ENCODE measurements at regions of chr19 and their contacts with region 1.

Region 1: GRCh38 chr19:14556662-14557188 is 15.1 kb downstream of the NDUFB7 start:
- DNase-seq: peak; percentile 82
- ATAC-seq: peak; percentile 87
- H3K4me3 Mint-ChIP-seq: peak overlapping the region; percentile 9
- H3K27ac Mint-ChIP-seq: peak overlapping the region; percentile 50
- H3K4me1 Mint-ChIP-seq: peaks cover 21% of the 10 kb centered on the region
- H3K27me3 Mint-ChIP-seq: no peaks in the 10 kb centered on the region

Region 2: DNA sequence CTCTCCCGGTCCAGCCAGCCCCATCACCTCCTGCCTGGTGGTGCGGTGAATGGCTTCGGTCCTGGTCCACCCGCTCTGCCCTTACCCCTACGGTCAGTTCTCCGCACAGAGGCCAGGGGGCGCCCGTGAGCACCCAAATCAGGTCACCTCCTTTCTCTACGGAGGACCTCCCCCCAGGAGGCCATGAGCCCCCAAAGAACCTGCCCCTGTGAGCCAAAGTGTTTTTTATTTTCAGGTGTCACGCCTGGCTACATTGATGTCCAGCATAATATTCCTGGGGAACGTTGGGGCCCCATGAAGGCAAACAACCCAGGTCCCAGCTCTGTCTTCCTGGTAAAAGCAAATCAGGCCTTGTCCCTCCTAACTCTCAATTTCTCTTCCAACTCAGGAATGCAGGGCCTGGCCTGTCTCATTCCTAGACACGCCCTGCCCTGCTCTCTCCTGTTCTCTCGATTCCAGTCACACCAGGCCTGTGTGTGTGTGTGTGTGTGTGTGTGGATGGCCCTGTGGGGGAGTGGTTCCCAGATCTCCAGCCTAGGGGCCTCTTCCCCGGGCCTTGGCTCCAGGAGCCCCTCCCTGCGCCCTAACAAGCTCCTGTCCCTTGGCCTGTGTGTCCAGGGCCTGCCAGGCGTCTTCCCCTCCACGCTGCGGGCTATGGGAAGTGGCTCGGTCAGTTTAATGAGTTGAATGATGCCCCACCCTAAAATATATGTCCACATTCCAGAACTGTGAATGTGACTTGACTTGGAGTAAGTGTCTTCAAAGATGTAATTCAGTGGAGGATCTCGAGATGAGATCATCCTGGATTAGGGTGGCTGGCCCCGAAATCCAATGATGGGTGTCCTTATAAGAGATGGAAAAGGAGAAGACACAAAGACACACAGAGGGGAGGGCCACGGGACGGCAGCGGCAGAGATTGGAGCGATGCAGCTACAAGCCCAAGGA is 51.0 kb before region 1 on chr19:
- CTCF ChIA-PET with region 1: interaction called, 11 read pairs
- DNase-seq: peak; percentile 82
- ATAC-seq: peak; percentile 72
- H3K4me3 Mint-ChIP-seq: no peak overlapping the region
- H3K27ac Mint-ChIP-seq: peak overlapping the region; percentile 65
- H3K4me1 Mint-ChIP-seq: peaks cover 33% of the 10 kb centered on the region
- H3K27me3 Mint-ChIP-seq: no peaks in the 10 kb centered on the region

Region 3: DNA sequence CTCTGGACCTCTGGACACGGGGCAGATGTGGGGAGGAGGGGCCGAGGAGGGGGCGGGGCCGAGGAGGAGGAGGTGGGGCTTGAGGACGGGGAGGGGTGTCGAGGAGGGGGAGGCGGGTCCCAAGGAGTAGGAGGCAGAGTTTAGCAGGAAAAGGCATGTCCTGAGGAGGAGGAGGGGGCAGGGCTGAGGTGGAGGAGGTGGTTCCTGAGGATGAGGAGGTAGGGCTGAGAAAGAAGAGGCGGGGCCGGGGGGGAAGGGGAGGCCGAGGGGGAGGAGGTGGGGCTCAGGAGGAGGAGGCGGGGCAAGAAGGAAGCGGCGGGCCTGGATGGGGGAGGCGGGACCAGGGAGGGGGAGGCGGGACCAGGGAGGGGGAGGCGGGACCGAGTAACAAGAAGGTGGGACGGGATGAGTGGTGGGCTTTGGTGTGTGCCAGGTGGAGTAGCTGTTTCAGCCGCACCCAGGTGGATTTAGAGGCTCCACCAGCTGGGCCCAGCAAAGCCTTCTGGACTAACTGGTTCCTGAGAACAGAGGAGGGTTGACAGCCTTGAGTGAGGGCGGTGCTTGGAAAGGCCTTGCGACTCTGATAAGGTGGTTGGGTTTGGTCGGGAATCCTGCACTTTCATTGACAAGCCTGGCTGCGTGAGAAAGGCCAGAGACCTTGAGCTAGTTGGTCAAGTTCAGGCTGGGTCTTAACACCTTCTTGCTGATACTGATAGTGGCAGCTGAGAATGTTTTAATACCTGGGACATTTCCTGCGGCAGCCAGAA is 19.6 kb before region 1 on chr19:
- CTCF ChIA-PET with region 1: interaction called, 10 read pairs
- DNase-seq: peak; percentile 68
- ATAC-seq: peak; percentile 66
- H3K4me3 Mint-ChIP-seq: no peak overlapping the region
- H3K27ac Mint-ChIP-seq: no peak overlapping the region
- H3K4me1 Mint-ChIP-seq: peaks cover 12% of the 10 kb centered on the region
- H3K27me3 Mint-ChIP-seq: no peaks in the 10 kb centered on the region

Region 4: DNA sequence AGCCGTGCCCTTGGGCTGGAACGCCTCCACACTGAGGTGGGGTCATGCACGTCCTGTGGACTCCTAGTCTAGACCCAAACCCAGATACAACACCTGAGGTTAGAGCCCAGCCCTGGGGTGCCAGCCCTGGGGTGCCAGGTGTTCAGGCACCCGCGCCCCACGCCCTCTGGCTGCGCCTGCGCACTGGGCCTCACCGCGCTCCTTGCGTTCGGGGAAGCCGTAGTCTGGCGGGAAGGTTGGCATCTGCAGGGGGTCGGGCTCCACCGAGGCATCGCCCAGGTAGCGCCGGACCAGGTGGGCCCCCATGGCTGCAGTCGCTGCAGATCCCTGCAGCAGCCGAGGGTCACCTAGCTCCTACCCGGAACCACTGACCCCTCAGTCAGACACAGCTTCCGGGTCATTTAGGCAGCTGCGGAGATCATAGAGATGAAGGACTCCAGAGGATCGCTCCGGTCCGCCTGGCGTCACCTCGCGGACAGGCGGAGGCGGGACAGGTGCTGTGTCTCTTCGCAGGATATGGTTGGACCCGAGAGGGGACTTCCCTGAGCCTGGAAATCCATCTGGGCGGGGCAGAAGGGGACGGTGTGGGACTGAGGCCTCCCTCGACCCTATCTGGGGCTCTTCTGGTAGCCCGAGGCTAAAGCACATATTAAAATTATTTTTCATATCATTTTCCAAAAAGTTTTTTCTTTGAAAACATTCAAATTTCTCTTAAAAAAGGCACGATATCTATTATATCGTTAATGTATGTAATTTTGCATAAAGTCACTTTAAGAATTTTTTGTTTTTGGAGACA is 15.2 kb after region 1 on chr19 and contains the start of gene NDUFB7:
- CTCF ChIA-PET with region 1: interaction called, 49 read pairs
- DNase-seq: peak; percentile 95
- ATAC-seq: peak; percentile 98
- H3K4me3 Mint-ChIP-seq: peak within 1 kb of the TSS; percentile 97
- H3K27ac Mint-ChIP-seq: peak within 1 kb of the TSS; percentile 92
- H3K4me1 Mint-ChIP-seq: peaks cover 43% of the 10 kb centered on the region
- H3K27me3 Mint-ChIP-seq: no peaks in the 10 kb centered on the region
- total RNA-seq, gene NDUFB7: 113 to 129 TPM

Region 5: DNA sequence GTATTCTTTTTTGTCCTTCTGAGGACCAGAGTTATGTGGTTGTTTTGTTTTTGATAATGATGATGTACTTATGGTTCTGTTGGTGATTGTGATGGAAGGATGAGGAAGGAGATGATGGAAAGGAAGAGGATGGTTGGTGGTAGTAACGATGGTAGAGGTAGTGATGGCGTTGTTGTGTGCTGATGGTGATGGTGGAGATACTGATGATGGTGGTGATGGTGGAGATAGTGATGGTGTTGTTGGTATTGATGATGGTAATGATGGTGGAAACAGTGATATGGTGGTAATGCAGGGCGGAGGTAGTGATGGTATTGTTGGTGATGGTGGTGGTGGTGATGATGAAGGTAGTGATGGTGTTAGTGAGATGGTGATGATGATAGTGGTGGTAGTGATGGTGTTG is 38.8 kb after region 1 on chr19:
- CTCF ChIA-PET with region 1: no interaction called
- DNase-seq: no peak
- ATAC-seq: no peak
- H3K4me3 Mint-ChIP-seq: no peak overlapping the region
- H3K27ac Mint-ChIP-seq: no peak overlapping the region
- H3K4me1 Mint-ChIP-seq: no peaks in the 10 kb centered on the region
- H3K27me3 Mint-ChIP-seq: no peaks in the 10 kb centered on the region

Region 6: GRCh38 chr19:14661372-14661924 is 104.7 kb after region 1 on chr19:
- CTCF ChIA-PET with region 1: no interaction called
- DNase-seq: no peak
- ATAC-seq: no peak
- H3K4me3 Mint-ChIP-seq: no peak overlapping the region
- H3K27ac Mint-ChIP-seq: no peak overlapping the region
- H3K4me1 Mint-ChIP-seq: no peaks in the 10 kb centered on the region
- H3K27me3 Mint-ChIP-seq: peaks cover 11% of the 10 kb centered on the region

Region 7: GRCh38 chr19:14689598-14690503 is 133.1 kb after region 1 on chr19 and contains the start of gene ZNF333:
- CTCF ChIA-PET with region 1: interaction called, 17 read pairs
- DNase-seq: peak; percentile 100
- ATAC-seq: peak; percentile 95
- H3K4me3 Mint-ChIP-seq: peak within 1 kb of the TSS; percentile 87
- H3K27ac Mint-ChIP-seq: peak within 1 kb of the TSS; percentile 100
- H3K4me1 Mint-ChIP-seq: peaks cover 12% of the 10 kb centered on the region
- H3K27me3 Mint-ChIP-seq: no peaks in the 10 kb centered on the region
- total RNA-seq, gene ZNF333: 8.5 to 11.1 TPM

Measured in activated CD8-positive, alpha-beta memory T cell treated with anti-CD3 and anti-CD28 coated beads, Interleukin-2, amount 10 ng/mL, durations not matched to agents 7 days and 5 days (primary cell).